ENCODE measurements at regions of chr20 and their contacts with region 1.

Region 1: GRCh38 chr20:15643714-15644113 is 929.5 kb downstream of the KIF16B start:
- H3K4me3 ChIP-seq: no peak overlapping the region
- H3K27ac ChIP-seq: no peak overlapping the region
- H3K4me1 ChIP-seq: no peaks in the 10 kb centered on the region
- CTCF ChIP-seq: no peak

Region 2: DNA sequence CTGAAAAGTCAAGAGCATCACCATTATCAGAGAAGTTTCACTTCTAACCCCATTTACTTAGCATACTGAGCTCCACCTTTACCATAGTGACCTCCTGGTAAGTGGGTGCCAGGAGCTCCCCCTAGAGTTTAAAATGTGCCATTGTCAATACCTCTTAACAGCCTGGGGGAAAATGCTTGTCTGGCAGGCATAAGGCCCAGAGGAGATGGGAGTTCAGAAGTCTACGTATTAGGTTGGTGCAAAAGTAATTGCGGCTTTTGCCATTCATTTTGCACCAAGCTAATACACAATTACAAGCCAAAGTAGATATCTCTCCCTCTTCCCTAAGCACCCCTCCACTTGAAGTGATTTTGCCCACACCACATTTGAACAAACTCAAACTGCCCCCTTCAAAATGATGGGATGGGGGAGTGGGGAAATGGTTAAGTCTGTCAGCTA is 10.5 kb after region 1 on chr20:
- CTCF ChIA-PET with region 1: interaction called, 12 read pairs
- POLR2A ChIA-PET with region 1: no interaction called
- H3K4me3 ChIP-seq: no peak overlapping the region
- H3K27ac ChIP-seq: no peak overlapping the region
- H3K4me1 ChIP-seq: no peaks in the 10 kb centered on the region
- CTCF ChIP-seq: no peak

Region 3: GRCh38 chr20:15759594-15759993 is 115.9 kb after region 1 on chr20:
- CTCF ChIA-PET with region 1: no interaction called
- POLR2A ChIA-PET with region 1: no interaction called
- H3K4me3 ChIP-seq: no peak overlapping the region
- H3K27ac ChIP-seq: no peak overlapping the region
- H3K4me1 ChIP-seq: no peaks in the 10 kb centered on the region
- CTCF ChIP-seq: no peak